ACHN (cell line): ENCODE measurements at regions of chr17 and their contacts with region 1.

Region 1: GRCh38 chr17:45307290-45308015 is 9.4 kb downstream of the MAP3K14 start:
- DNase-seq: peak; percentile 45

Region 2: DNA sequence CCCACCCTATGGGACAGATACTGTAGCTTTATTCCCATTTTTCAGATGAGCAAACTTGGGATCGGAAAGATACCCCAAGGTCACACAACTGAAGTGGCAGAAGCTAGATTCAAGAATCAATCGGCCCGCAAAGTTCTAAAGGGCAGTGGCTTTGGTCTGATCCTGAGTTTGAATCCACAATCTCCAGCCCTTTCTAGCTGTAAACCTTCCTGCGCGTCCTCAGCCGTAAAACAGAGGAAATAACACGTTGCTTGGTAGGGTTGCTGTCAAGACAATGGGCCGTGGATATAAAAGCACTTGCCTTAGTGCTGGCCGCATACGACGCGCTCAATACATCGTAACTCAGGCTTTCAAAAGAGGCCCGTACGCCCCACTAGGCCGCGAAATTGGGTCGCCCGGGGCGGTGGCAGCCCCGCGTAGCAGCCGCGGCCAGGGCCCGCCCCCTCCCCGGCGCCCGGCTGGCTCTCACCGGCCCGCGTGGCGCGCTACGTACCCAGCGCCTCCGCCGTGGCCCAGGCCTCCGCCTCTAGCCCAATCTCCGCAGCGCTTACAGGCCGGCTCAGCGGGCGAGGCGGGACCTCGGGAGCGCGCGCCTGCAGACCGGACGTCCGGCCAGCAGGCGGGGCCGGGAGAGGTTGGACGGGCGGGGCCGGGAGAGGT is 256.3 kb before region 1 on chr17 and contains the start of gene DCAKD:
- in situ Hi-C with region 1: no loop called
- DNase-seq: peak; percentile 98

Region 3: GRCh38 chr17:45385331-45385997 is 78.0 kb after region 1 on chr17:
- in situ Hi-C with region 1: loop called (anchors 10 kb)
- DNase-seq: peak; percentile 86